Activated CD8-positive, alpha-beta T cell treated with anti-CD3 and anti-CD28 coated beads, Interleukin-2, amount 10 ng/mL, durations not matched to agents 7 days and 5 days (primary cell): ENCODE measurements at regions of chr10 and their contacts with region 1.

Region 1: DNA sequence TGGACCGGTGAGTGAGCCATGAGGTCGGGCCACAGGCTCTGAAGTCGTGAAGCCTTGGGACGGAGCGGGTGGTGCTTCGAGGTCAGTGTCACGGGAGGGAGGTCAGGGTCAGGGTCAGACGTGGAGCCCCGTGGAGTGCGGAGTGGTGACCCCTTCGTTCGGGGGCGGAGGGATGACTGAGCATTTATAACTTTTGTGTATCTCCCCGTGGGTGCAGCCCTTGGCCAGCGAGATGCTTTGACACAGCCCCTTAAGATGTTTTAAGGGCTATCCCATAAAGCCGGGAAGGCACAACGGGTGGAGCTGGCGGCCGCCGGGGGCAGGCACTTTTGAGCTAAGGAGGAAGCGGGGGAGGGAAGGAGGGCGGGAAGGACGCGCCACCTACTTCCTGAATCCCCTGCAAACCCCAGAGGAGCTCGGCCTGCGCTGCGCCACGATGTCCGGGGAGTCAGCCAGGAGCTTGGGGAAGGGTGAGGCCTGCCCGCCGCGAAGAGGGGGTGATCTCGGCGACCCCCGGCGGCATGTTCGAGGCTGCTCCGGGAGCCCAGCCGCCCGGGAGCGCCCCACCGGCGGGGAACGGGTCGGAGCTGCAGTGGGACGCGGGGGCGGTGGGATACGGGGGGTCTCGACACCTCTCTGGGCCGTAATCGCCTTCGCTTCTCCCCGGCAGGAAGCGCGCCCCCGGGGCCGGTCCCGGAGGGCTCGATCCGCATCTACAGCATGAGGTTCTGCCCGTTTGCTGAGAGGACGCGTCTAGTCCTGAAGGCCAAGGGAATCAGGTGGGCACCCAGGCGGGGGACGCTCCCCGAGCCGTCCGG is at the start of gene GSTO1:
- DNase-seq: peak; percentile 62
- ATAC-seq: peak; percentile 81
- H3K4me3 Mint-ChIP-seq: peak within 1 kb of the TSS; percentile 93
- H3K27ac Mint-ChIP-seq: peak within 1 kb of the TSS; percentile 97
- H3K4me1 Mint-ChIP-seq: peaks cover 50% of the 10 kb centered on the region
- H3K27me3 Mint-ChIP-seq: peaks cover 4% of the 10 kb centered on the region
- total RNA-seq, gene GSTO1: 114 to 119 TPM

Region 2: DNA sequence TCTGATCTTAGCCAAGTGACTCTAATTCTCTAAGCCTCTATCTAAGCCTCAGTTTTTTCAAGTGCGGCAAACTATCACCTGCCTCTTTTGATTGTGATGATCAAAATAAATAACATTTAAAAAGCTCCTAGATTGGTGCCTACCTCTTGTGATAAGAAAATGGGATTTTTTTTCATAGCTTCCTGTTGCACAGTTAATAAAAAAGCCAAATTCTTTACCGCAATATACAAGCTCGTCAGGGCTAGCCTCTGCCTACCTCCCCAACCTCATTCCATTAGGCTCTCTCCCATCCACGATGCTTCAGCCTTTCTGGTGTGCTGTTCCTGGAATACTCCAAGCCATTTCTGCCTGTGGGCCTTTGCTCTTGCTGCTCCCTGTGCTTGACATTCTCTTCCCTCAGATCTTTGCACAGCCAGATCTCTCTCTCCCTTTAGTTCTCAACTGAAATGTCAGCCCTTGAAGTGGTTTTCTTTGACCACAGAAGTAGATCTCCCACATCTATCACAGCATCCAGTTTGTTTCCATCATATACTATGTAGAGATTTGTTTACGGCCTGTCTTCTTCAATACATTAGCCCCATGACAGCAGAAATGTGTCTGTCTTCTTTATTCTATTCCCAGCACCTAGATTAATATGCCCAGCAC is 84.0 kb before region 1 on chr10:
- CTCF ChIA-PET with region 1: no interaction called
- POLR2A ChIA-PET with region 1: no interaction called
- DNase-seq: peak; percentile 29
- ATAC-seq: peak; percentile 89
- H3K4me3 Mint-ChIP-seq: no peak overlapping the region
- H3K27ac Mint-ChIP-seq: no peak overlapping the region
- H3K4me1 Mint-ChIP-seq: peaks cover 11% of the 10 kb centered on the region
- H3K27me3 Mint-ChIP-seq: peaks cover 31% of the 10 kb centered on the region

Region 3: GRCh38 chr10:104268716-104269645 is 14.3 kb after region 1 on chr10 and contains the start of gene GSTO2:
- CTCF ChIA-PET with region 1: interaction called, 94 read pairs
- POLR2A ChIA-PET with region 1: interaction called, 34 read pairs
- DNase-seq: peak; percentile 99
- ATAC-seq: peak; percentile 99
- H3K4me3 Mint-ChIP-seq: peak within 1 kb of the TSS; percentile 87
- H3K27ac Mint-ChIP-seq: peak within 1 kb of the TSS; percentile 86
- H3K4me1 Mint-ChIP-seq: peaks cover 48% of the 10 kb centered on the region
- H3K27me3 Mint-ChIP-seq: peaks cover under 1% of the 10 kb centered on the region
- total RNA-seq, gene GSTO2: 0.94 to 1.2 TPM

Region 4: GRCh38 chr10:104501864-104502579 is 247.3 kb after region 1 on chr10:
- CTCF ChIA-PET with region 1: no interaction called
- POLR2A ChIA-PET with region 1: no interaction called
- DNase-seq: no peak
- ATAC-seq: no peak
- H3K4me3 Mint-ChIP-seq: no peak overlapping the region
- H3K27ac Mint-ChIP-seq: no peak overlapping the region
- H3K4me1 Mint-ChIP-seq: no peaks in the 10 kb centered on the region
- H3K27me3 Mint-ChIP-seq: peaks cover 6% of the 10 kb centered on the region